H1 (cell line): ENCODE measurements at regions of chr2 and their contacts with region 1.

Region 1: DNA sequence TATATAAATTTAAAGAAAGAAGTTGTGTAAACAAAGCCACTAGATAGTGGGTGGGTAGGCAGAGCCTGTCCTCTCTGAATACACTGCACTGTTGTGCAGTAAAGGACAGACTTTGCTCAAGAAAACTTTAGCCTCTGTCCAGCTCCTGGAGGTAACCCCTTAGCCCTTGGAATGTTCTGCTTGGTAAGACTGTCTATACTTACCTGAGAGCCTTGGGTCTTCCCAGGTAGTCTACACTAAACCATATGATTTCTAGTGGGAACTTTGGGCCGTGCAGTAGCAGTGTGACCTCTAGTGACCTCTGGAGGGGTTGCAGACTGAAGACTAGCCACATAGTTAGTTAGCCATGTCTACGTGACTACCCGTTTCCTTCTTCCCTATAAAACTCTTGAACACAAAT is 678.3 kb upstream of the NRXN1 start:
- DNase-seq: peak; percentile 25 to 63
- H3K4me3 ChIP-seq: no peak overlapping the region
- H3K27ac ChIP-seq: no peak overlapping the region
- H3K4me1 ChIP-seq: peaks cover 0 to 2% (median 0%) of the 10 kb centered on the region in 4 experiments; a peak in 1 of 7 replicates
- H3K27me3 ChIP-seq: no peaks in the 10 kb centered on the region
- CTCF ChIP-seq: peak; percentile 64 to 89 (median 70)
- EP300 ChIP-seq: no peak
- POLR2A ChIP-seq: no peak
- RAD21 ChIP-seq: peak; percentile 96

Region 2: GRCh38 chr2:51424418-51424817 is 285.8 kb before region 1 on chr2:
- CTCF ChIA-PET with region 1: interaction called, 20 read pairs
- POLR2A ChIA-PET with region 1: no interaction called
- DNase-seq: peak; percentile 33 to 51
- H3K4me3 ChIP-seq: no peak overlapping the region
- H3K27ac ChIP-seq: no peak overlapping the region
- H3K4me1 ChIP-seq: no peaks in the 10 kb centered on the region
- H3K27me3 ChIP-seq: no peaks in the 10 kb centered on the region
- CTCF ChIP-seq: peak; percentile 69 to 80 (median 76)
- EP300 ChIP-seq: no peak
- POLR2A ChIP-seq: no peak
- RAD21 ChIP-seq: peak; percentile 87 to 91